ENCODE measurements at regions of chr9 and their contacts with region 1.

Region 1: DNA sequence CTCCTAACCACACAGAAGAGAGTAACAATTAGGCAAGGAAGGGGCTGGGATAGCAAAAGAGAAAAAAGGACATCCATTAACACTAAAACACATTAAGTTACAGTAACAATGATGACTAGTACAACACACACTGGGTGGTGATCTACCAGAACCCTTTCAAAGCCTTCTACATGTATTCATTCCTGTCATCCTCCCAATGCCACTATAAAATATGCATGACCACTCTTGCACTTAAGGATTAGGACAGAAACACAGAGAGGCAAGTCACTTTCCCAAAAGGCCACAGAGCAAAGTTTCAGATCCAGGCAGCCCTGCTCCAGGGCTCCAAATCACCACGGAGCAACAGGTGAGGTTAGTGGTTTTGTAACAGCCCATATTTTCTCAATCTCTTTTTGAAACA is 86.8 kb downstream of the AUH start:
- DNase-seq: no peak
- H3K4me3 ChIP-seq: no peak overlapping the region
- H3K27ac ChIP-seq: peak overlapping the region; percentile 11; the same call in 1 of the 2 replicates
- H3K4me1 ChIP-seq: 0 out of 2 replicates have a peak, but pooled peaks cover 8% of the 10 kb centered on the region
- H3K27me3 ChIP-seq: no peaks in the 10 kb centered on the region
- CTCF ChIP-seq: no peak

Region 2: DNA sequence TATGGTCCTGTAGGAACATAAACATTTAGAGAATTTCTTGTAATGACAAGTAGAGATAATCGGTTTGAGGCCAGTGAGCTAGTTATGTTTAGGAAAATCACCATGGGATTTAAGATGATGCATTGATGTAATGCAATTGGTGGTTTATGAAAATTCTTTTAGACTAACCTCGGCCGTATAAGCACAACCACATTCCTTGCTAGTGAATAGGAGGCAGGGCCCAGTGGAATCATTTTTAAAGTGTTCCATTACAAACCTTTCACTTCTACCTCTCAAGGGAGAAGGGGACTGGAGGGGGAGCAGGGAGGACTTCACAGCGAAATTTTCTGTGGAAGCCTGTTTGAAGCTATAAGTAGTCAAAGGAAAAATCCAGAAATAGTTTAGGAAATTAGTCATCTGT is 220.5 kb after region 1 on chr9:
- CTCF ChIA-PET with region 1: interaction called, 13 read pairs
- POLR2A ChIA-PET with region 1: no interaction called
- intact Hi-C with region 1: no loop called
- DNase-seq: peak; percentile 21 to 71
- H3K4me3 ChIP-seq: no peak overlapping the region
- H3K27ac ChIP-seq: no peak overlapping the region
- H3K4me1 ChIP-seq: peaks cover 16% of the 10 kb centered on the region; the same call in 1 of the 2 replicates
- H3K27me3 ChIP-seq: no peaks in the 10 kb centered on the region
- CTCF ChIP-seq: no peak